Activated CD4-positive, alpha-beta T cell treated with anti-CD3 and anti-CD28 coated beads, Interleukin-2, amount 10 ng/mL, durations not matched to agents 24 days and 14 days (primary cell): ENCODE measurements at regions of chr11 and their contacts with region 1.

Region 1: GRCh38 chr11:57800444-57801182 is 39.0 kb downstream of the CTNND1 start:
- DNase-seq: peak; percentile 80
- H3K4me3 Mint-ChIP-seq: peak overlapping the region; percentile 32
- H3K27ac Mint-ChIP-seq: peak overlapping the region; percentile 23
- H3K4me1 Mint-ChIP-seq: peaks cover 28% of the 10 kb centered on the region
- H3K27me3 Mint-ChIP-seq: no peaks in the 10 kb centered on the region

Region 2: DNA sequence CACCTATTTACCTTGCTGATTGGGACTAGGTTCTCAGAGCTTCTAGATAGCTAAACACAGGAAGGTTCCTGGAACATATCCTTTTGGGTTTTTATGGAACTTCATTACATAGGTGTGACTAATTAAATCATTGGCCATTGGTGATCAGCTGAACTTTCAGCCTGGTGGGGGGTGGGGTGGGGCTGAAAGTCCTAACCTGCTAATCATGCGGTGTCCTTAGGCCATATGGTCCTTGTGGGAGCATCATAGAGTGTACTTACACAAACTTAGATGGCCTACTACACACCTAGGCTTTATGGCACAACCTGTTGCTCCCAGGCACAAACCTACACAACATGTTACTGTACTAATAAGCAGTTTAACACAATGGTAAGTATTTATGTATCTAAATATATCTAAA is 68.0 kb before region 1 on chr11:
- intact Hi-C with region 1: no loop called
- DNase-seq: no peak
- H3K4me3 Mint-ChIP-seq: no peak overlapping the region
- H3K27ac Mint-ChIP-seq: no peak overlapping the region
- H3K4me1 Mint-ChIP-seq: peaks cover 22% of the 10 kb centered on the region
- H3K27me3 Mint-ChIP-seq: no peaks in the 10 kb centered on the region

Region 3: GRCh38 chr11:57751676-57752253 is 48.8 kb before region 1 on chr11 and contains the start of gene BTBD18:
- intact Hi-C with region 1: loop called (anchors 1 kb)
- DNase-seq: peak; percentile 66
- H3K4me3 Mint-ChIP-seq: no peak within 1 kb of the TSS
- H3K27ac Mint-ChIP-seq: no peak within 1 kb of the TSS
- H3K4me1 Mint-ChIP-seq: peaks cover 18% of the 10 kb centered on the region
- H3K27me3 Mint-ChIP-seq: no peaks in the 10 kb centered on the region
- total RNA-seq, gene BTBD18: not detected in 2 replicates